ENCODE measurements at regions of chr6 and their contacts with region 1.

Region 1: GRCh38 chr6:7188492-7188891 is 80.7 kb downstream of the RREB1 start:
- DNase-seq: no peak
- H3K4me3 ChIP-seq: no peak overlapping the region
- H3K27ac ChIP-seq: no peak overlapping the region
- H3K4me1 ChIP-seq: peaks cover 0 to 8% (median 2%) of the 10 kb centered on the region in 4 experiments
- H3K27me3 ChIP-seq: no peaks in the 10 kb centered on the region

Region 2: GRCh38 chr6:7107578-7108195 is 80.8 kb before region 1 on chr6 and contains the start of gene RREB1:
- CTCF ChIA-PET with region 1: no interaction called
- POLR2A ChIA-PET with region 1: no interaction called
- DNase-seq: peak; percentile 63 to 89 (median 79)
- H3K4me3 ChIP-seq: peak within 1 kb of the TSS; percentile 87 to 99 (median 93)
- H3K27ac ChIP-seq: peak within 1 kb of the TSS; percentile 68 to 84
- H3K4me1 ChIP-seq: peaks cover 11 to 48% (median 33%) of the 10 kb centered on the region in 4 experiments
- H3K27me3 ChIP-seq: no peaks in the 10 kb centered on the region

Region 3: DNA sequence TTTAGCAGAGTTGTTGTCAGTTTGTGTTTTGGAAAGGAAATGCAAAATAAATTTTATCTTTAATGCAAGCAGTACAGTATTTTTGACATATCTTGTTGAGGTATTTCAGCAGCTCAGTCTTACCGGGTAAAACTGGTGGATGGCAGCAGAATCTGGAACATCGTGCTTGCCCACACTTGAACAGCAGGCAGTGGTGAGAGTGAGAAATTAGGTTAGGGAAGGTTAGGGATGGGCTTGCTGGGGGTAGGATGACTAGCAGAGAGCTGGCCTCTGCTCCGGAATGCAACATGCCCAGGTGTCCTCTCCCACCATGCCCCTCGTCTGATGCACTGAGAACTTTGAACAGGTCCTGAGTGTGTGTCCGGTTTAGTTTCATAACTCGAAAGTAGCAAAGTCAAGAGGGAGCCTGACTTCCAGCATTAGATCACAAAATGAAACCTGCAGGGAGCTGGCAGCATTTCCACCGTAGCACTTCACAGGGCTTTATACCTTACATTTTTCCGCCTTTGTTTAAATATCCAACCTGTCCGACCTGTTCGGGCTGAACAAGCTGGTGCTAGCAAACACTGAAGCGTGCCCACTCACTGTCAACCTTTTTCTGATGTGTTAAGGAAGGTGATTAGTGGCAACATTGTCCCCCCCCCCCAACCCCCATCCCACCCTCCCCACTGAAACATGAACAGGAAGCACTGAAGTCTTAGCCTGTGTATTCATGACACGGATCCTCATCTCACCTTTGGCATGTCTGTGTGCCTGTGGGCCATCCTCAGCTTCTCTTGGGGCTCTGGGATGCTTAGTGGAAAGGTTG is 12.6 kb after region 1 on chr6:
- CTCF ChIA-PET with region 1: interaction called, 10 read pairs
- POLR2A ChIA-PET with region 1: no interaction called
- DNase-seq: peak in 1 of 3 donors; percentile 23
- H3K4me3 ChIP-seq: peak overlapping the region in 3 of 7 experiments; percentile 31 to 57 (median 50)
- H3K27ac ChIP-seq: peak overlapping the region; percentile 9 to 79
- H3K4me1 ChIP-seq: peaks cover 12 to 49% (median 27%) of the 10 kb centered on the region in 4 experiments
- H3K27me3 ChIP-seq: no peaks in the 10 kb centered on the region

Region 4: GRCh38 chr6:7489376-7489775 is 300.9 kb after region 1 on chr6:
- CTCF ChIA-PET with region 1: no interaction called
- POLR2A ChIA-PET with region 1: no interaction called
- DNase-seq: no peak
- H3K4me3 ChIP-seq: no peak overlapping the region
- H3K27ac ChIP-seq: no peak overlapping the region
- H3K4me1 ChIP-seq: no peaks in the 10 kb centered on the region
- H3K27me3 ChIP-seq: peaks cover 0 to 3% (median 0%) of the 10 kb centered on the region in 5 experiments